Breast epithelium (tissue), 4 donors: ENCODE measurements at regions of chr12 and their contacts with region 1.

Region 1: GRCh38 chr12:52156736-52157565 is 34.9 kb downstream of the KRT80 start:
- DNase-seq: peak; percentile 88 to 92
- H3K4me3 ChIP-seq: no peak overlapping the region
- H3K27ac ChIP-seq: peak overlapping the region; percentile 88 to 100
- H3K4me1 ChIP-seq: peaks cover under 1% of the 10 kb centered on the region in 2 donors
- H3K27me3 ChIP-seq: no peaks in the 10 kb centered on the region
- CTCF ChIP-seq: peak; percentile 90 to 99 (median 96)
- POLR2A ChIP-seq: no peak

Region 2: GRCh38 chr12:52327052-52327829 is 170.3 kb after region 1 on chr12:
- intact Hi-C with region 1: loop called (anchors 5 kb)
- DNase-seq: peak; percentile 85 to 89
- H3K4me3 ChIP-seq: no peak overlapping the region
- H3K27ac ChIP-seq: peak overlapping the region; percentile 1 to 75
- H3K4me1 ChIP-seq: no peaks in the 10 kb centered on the region
- H3K27me3 ChIP-seq: no peaks in the 10 kb centered on the region
- CTCF ChIP-seq: peak in 2 of 3 donors; percentile 77 to 88
- POLR2A ChIP-seq: no peak

Region 3: DNA sequence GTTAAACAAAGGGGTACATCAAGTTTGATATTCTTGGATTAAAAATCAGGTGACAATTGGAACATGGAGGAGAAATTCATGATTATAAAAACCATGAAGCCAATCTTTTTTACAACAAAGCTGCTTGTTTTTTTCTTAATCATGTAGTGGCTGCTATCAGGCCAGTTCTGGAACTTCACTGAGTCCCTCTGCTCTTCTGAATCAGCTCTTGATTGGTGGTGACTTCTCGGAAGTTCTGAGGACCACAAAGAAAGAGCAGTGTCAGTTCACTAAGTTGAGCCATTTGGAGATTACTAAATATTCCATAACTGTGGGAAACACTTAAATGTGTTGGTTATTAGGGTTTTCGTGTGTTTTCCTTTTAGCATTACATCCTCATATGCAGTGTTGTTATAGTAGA is 857.8 kb after region 1 on chr12:
- intact Hi-C with region 1: no loop called
- DNase-seq: no peak
- H3K4me3 ChIP-seq: no peak overlapping the region
- H3K27ac ChIP-seq: no peak overlapping the region
- H3K4me1 ChIP-seq: no peaks in the 10 kb centered on the region
- H3K27me3 ChIP-seq: no peaks in the 10 kb centered on the region
- CTCF ChIP-seq: no peak
- POLR2A ChIP-seq: no peak